Mammary epithelial cell (primary cell): ENCODE measurements at regions of chr5 and their contacts with region 1.

Region 1: DNA sequence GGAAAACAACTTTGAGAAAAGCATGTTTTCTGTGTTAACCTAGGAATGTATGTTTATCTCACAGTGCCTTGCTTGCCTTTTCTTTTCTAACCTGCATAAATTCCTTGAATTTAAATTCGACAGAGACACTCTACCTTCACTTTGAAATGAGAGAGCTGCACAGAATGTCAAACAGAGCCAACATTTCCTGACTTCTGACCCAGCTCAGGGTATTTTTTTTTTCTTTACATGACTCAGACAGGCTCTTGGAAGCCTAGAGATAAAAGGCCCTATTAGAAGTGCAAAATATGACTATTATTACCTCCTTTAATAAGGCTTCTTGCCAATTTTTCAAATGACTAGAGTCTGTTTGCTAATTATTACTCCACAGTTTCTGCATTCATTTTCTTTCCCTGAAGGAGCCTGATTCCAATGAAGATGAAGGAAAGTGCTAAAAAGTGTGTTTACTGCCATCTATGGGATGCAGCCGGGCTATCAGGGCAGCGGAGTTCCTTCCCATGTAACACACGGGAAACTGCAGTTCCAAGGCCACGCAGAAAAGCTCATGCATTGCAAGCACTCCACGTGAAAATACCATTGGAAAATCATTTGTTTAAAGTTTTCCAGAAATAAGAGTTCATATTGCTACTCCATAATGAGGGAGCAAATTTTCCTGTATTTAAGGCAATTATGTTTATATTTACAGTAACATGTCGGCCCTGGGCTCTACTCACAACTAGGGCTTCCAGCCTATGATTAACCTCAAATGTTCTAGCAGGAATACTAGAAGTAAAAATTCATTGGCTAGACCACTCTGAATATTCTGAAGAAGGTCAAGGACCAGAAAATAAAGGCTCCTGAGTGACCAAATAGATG is 485.6 kb downstream of the ZSWIM6 start:
- DNase-seq: peak; percentile 46
- H3K4me3 ChIP-seq: no peak overlapping the region
- H3K27ac ChIP-seq: no peak overlapping the region
- H3K4me1 ChIP-seq: no peaks in the 10 kb centered on the region
- H3K27me3 ChIP-seq: no peaks in the 10 kb centered on the region
- CTCF ChIP-seq: peak; percentile 76 to 84

Region 2: DNA sequence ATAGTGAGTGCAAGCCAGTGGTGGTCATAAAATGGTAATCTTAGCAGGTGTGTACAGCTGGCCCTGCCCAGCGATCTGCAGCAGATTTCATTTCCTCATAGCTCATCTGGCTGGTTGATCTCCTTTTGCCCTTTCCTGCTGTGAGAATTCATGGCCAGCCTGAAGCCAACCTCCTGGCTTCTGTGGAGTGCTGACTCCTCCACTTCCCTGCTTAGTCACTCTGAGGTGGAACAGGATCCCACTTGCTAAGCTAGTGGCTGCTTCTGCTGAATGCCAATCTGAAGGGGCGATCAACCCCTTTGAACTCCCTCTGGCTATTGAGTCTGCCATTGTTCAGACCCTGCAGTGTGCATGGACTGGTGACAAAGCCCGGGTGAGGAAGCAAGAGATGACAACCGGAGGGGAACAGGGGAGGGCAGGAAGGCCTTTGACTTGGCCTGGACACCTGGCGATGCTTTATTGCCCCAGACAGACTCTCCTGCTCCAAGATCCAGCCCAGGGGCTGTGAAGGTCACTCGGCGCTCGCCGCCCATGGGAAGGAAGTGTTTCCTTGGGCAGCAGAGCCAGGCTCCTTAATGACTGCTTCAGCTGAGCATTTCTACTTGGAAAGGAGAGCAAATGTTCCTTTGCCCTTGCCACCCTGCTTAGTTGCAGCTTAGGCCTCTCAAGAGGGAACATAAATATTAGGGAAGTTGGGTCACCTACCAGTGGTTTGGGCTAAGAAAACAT is 144.5 kb before region 1 on chr5:
- CTCF ChIA-PET with region 1: no interaction called
- dilution Hi-C with region 1: no loop called
- in situ Hi-C with region 1: no loop called
- intact Hi-C with region 1: loop called (anchors 2 kb)
- DNase-seq: peak; percentile 83
- H3K4me3 ChIP-seq: no peak overlapping the region
- H3K27ac ChIP-seq: no peak overlapping the region
- H3K4me1 ChIP-seq: peaks cover 18% of the 10 kb centered on the region
- H3K27me3 ChIP-seq: no peaks in the 10 kb centered on the region
- CTCF ChIP-seq: no peak

Region 3: GRCh38 chr5:61687371-61687770 is 130.3 kb before region 1 on chr5:
- CTCF ChIA-PET with region 1: no interaction called
- dilution Hi-C with region 1: no loop called
- in situ Hi-C with region 1: no loop called
- intact Hi-C with region 1: no loop called
- DNase-seq: peak; percentile 31
- H3K4me3 ChIP-seq: no peak overlapping the region
- H3K27ac ChIP-seq: no peak overlapping the region
- H3K4me1 ChIP-seq: peaks cover 14% of the 10 kb centered on the region
- H3K27me3 ChIP-seq: no peaks in the 10 kb centered on the region
- CTCF ChIP-seq: no peak

Region 4: GRCh38 chr5:61768692-61769281 is 48.9 kb before region 1 on chr5:
- CTCF ChIA-PET with region 1: no interaction called
- dilution Hi-C with region 1: no loop called
- in situ Hi-C with region 1: no loop called
- intact Hi-C with region 1: loop called (anchors 2 kb)
- DNase-seq: peak; percentile 45
- H3K4me3 ChIP-seq: no peak overlapping the region
- H3K27ac ChIP-seq: no peak overlapping the region
- H3K4me1 ChIP-seq: no peaks in the 10 kb centered on the region
- H3K27me3 ChIP-seq: no peaks in the 10 kb centered on the region
- CTCF ChIP-seq: peak; percentile 98 to 100